ENCODE measurements at regions of chr6 and their contacts with region 1.

Region 1: DNA sequence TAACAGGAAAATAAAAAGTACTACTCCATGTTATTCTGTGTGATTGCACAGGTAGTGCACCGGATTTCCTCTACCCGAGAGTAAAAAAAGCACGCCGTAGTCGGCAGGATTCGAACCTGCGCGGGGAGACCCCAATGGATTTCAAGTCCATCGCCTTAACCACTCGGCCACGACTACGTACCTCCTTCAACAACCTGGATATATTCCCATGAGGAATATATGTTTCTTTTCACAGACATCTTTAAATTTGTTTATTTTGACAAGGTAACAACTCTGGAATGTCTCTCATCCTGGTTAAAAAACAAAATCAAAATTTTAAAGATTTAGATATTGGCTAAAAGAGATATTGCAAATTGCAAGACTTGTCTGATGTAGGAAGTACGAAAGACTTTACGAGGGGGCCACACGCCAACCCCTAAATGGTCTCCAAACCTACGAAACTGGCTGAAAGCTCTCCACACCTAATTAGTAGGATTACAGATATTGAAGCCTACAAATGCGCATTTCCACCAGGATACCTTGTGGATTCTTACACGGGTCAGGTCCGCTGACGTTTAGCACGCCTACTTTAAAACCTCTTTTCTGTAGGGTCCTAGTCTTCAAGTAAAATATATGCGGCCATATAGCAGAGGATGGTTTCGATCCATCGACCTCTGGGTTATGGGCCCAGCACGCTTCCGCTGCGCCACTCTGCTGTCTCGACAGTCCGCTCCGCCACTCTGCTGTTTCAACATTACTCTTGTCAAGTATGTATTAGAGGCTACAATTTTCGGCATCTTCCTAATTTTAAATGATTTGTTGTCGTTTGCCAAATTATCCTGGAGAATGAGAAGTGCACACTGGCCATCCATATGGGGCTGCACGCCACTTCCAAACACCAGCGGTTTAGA is 52.3 kb upstream of the BTN3A2 start:
- DNase-seq: peak; percentile 63
- ATAC-seq: peak; percentile 79
- H3K4me3 Mint-ChIP-seq: peak overlapping the region; percentile 90
- H3K27ac Mint-ChIP-seq: peak overlapping the region; percentile 95
- H3K4me1 Mint-ChIP-seq: peaks cover 28% of the 10 kb centered on the region
- H3K27me3 Mint-ChIP-seq: peaks cover 5% of the 10 kb centered on the region
- CTCF ChIP-seq: no peak

Region 2: DNA sequence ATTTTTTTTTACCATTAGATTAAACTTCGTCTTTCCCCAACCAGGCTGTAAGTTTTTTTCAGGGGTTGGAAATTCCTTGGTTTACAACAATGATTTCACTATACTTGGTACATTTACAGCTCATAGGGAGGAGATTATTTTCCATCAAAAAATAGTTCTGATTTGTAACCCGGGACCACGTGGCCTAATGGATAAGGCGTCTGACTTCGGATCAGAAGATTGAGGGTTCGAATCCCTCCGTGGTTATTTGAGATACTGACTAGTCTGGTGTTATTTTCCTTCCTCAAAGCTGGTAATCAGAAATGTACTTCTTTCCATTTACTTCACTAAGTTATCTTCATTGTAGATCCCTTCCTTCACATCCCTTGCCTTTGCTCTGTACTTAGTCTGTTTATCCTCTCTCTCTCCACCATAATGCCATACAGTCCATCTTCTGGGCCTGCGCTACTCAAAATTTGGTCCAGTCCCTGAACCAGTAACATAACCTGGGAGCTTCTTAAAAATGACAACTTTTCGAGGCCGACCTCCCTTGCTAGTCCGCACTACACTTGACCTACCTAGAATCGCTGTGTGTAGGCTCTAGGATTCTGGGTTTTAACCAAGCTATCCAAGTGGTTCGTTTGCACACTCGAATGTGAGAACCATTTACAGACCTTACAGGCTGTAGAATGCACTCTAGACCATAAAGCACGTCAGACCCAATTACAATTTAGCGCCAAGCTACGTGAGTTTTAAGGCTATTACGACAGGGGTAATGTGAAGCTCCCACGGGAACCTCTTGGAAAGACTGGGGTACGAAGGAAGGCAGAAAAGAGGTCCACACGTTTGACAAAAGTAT is 10.1 kb after region 1 on chr6:
- CTCF ChIA-PET with region 1: interaction called, 7 read pairs
- POLR2A ChIA-PET with region 1: interaction called, 7 read pairs
- intact Hi-C with region 1: loop called (anchors 1 kb)
- DNase-seq: no peak
- ATAC-seq: peak; percentile 56
- H3K4me3 Mint-ChIP-seq: peak overlapping the region; percentile 89
- H3K27ac Mint-ChIP-seq: peak overlapping the region; percentile 85
- H3K4me1 Mint-ChIP-seq: peaks cover 25% of the 10 kb centered on the region
- H3K27me3 Mint-ChIP-seq: peaks cover 14% of the 10 kb centered on the region
- CTCF ChIP-seq: no peak

Region 3: DNA sequence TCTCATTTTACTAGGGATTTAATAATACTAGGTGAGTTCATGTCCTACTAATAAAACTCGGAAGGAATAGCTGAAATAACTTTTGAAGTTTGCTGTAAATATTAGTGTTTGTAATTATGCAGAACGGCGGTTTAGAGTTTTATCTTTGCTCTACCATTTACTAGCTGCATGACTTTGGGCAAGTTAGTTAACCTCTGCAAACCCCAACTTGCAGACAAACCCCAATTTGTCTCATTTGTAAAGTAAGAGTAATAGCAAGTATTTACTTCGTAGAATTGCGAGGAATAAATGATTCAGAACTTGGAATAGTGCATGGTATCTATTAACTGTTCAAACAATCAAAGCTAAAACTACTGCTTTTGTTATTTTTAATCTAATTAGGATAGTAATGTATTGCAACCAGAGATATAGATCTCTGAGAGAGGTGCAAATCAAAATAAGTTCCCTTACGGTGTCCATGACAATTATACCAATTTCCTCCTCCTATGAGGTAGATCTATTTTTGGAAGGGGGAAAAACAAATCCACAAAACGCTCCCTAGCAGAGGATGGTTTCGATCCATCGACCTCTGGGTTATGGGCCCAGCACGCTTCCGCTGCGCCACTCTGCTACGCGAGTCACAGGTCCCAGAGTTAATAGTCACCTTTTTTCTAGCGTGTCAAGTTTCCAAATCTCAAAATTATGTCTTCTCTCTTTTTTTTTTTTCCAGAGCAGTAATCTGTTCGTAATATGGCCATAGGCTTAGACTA is 17.2 kb after region 1 on chr6:
- CTCF ChIA-PET with region 1: interaction called, 3 read pairs
- POLR2A ChIA-PET with region 1: interaction called, 5 read pairs
- intact Hi-C with region 1: loop called (anchors 1 kb)
- DNase-seq: no peak
- ATAC-seq: peak; percentile 18
- H3K4me3 Mint-ChIP-seq: peak overlapping the region; percentile 41
- H3K27ac Mint-ChIP-seq: peak overlapping the region; percentile 65
- H3K4me1 Mint-ChIP-seq: peaks cover 25% of the 10 kb centered on the region
- H3K27me3 Mint-ChIP-seq: peaks cover 42% of the 10 kb centered on the region
- CTCF ChIP-seq: no peak

Measured in activated B cell treated with CpG ODN at 0.5 μM for 24 hours (primary cell).